ENCODE measurements at regions of chr14 and their contacts with region 1.

Region 1: GRCh38 chr14:23567192-23568020 is at the start of gene AP1G2:
- DNase-seq: peak; percentile 95
- H3K4me3 Mint-ChIP-seq: peak within 1 kb of the TSS; percentile 91
- H3K27ac Mint-ChIP-seq: peak within 1 kb of the TSS; percentile 90
- H3K4me1 Mint-ChIP-seq: peaks cover 34% of the 10 kb centered on the region
- H3K27me3 Mint-ChIP-seq: no peaks in the 10 kb centered on the region
- total RNA-seq, gene AP1G2: 182 to 190 TPM

Region 2: GRCh38 chr14:23478111-23478759 is 89.2 kb before region 1 on chr14:
- CTCF ChIA-PET with region 1: interaction called, 223 read pairs
- POLR2A ChIA-PET with region 1: interaction called, 4 read pairs
- intact Hi-C with region 1: loop called (anchors 1 kb)
- DNase-seq: peak; percentile 68
- H3K4me3 Mint-ChIP-seq: no peak overlapping the region
- H3K27ac Mint-ChIP-seq: peak overlapping the region; percentile 31
- H3K4me1 Mint-ChIP-seq: peaks cover 2% of the 10 kb centered on the region
- H3K27me3 Mint-ChIP-seq: no peaks in the 10 kb centered on the region

Measured in activated CD4-positive, alpha-beta memory T cell treated with anti-CD3 and anti-CD28 coated beads for 36 hours (primary cell).